Posterior vena cava (tissue), 2 donors: ENCODE measurements at regions of chr15 and their contacts with region 1.

Region 1: DNA sequence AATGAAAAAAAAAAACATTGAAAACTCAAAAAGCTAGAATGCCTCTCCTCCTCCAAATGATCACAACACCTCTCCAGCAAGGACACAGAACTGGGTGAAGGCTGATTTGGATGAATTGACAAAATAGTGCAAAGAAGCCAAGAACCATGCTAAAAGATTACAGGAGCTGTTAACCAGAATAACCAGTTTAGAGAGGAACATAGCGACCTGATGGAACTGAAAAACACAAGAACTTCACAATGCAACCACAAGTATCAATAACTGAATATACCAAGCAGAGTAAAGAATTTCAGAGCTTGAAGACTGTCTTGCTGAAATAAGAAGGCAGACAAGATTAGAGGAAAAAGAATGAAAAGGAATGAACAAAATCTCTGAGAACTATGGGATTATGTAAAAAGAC is 90.6 kb upstream of the THSD4 start:
- DNase-seq: no peak

Region 2: GRCh38 chr15:71103102-71103676 is 78.5 kb after region 1 on chr15:
- intact Hi-C with region 1: loop called in 1 of 2 experiments (anchors 10 kb)
- DNase-seq: no peak